H1 (cell line): ENCODE measurements at regions of chr19 and their contacts with region 1.

Region 1: GRCh38 chr19:11987405-11988281 is 22.8 kb downstream of the ZNF763 start:
- DNase-seq: peak; percentile 90 to 96
- H3K4me3 ChIP-seq: peak overlapping the region; percentile 82 to 99 (median 98)
- H3K27ac ChIP-seq: peak overlapping the region; percentile 77
- H3K4me1 ChIP-seq: peaks cover 0 to 5% (median 0%) of the 10 kb centered on the region in 4 experiments; a peak in 4 of 7 replicates
- H3K27me3 ChIP-seq: no peaks in the 10 kb centered on the region
- CTCF ChIP-seq: no peak
- EP300 ChIP-seq: no peak
- POLR2A ChIP-seq: peak; percentile 95 to 96
- RAD21 ChIP-seq: no peak

Region 2: DNA sequence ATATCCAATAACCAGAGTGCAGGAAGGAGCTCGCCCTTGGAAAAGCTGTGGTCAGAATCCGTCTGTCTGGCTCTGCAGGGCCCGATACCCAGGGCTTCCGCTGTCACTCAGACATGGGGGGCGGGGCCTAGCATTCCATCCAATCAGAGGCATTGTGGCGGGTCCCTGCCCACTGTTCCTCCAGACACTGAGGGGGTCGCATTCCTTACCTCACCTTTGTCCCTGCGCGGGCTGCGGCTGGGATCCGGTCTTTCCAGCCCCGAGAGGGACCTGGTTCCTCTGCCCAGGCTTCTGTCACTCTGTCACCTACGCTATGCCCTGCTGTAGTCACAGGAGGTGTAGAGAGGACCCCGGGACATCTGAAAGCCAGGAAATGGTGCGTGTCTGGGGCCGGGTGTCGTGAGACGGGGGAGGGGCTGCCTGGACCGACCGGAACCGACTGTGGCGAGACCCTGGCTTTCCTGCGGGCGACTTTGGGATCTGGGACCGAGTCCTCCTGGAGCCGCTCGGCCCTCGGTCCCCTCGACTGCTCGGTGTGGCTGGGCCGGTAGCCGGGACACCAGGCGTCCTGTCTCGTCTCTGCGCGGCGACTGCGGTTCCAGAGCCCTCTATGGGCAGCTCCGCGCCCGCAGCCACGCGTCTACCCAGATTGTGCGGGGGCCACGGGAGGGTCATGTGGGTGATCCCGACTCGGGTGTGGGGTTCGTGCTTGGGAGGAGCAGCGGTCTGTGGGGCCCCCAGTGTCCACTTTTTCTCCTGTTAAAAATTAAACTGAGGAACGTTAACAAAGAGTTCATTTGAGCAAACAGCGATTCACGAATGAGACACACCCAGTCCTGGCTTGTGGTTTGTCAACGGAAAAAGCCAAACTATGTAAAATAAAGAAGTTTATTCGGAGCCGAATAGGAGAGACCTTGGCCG is 99.8 kb before region 1 on chr19 and contains the start of gene ZNF69:
- CTCF ChIA-PET with region 1: interaction called, 169 read pairs
- POLR2A ChIA-PET with region 1: interaction called, 65 read pairs
- DNase-seq: peak; percentile 75 to 89
- H3K4me3 ChIP-seq: peak within 1 kb of the TSS; percentile 79 to 85 (median 84)
- H3K27ac ChIP-seq: peak within 1 kb of the TSS; percentile 81
- H3K4me1 ChIP-seq: peaks cover 4 to 15% (median 6%) of the 10 kb centered on the region in 4 experiments
- H3K27me3 ChIP-seq: no peaks in the 10 kb centered on the region
- CTCF ChIP-seq: peak in 1 of 3 experiments; percentile 6; a peak in 1 of 4 replicates
- EP300 ChIP-seq: no peak
- POLR2A ChIP-seq: peak; percentile 65 to 86
- RAD21 ChIP-seq: no peak
- total RNA-seq, gene ZNF69: 21.2 and 22.8 TPM in 2 replicates

Region 3: DNA sequence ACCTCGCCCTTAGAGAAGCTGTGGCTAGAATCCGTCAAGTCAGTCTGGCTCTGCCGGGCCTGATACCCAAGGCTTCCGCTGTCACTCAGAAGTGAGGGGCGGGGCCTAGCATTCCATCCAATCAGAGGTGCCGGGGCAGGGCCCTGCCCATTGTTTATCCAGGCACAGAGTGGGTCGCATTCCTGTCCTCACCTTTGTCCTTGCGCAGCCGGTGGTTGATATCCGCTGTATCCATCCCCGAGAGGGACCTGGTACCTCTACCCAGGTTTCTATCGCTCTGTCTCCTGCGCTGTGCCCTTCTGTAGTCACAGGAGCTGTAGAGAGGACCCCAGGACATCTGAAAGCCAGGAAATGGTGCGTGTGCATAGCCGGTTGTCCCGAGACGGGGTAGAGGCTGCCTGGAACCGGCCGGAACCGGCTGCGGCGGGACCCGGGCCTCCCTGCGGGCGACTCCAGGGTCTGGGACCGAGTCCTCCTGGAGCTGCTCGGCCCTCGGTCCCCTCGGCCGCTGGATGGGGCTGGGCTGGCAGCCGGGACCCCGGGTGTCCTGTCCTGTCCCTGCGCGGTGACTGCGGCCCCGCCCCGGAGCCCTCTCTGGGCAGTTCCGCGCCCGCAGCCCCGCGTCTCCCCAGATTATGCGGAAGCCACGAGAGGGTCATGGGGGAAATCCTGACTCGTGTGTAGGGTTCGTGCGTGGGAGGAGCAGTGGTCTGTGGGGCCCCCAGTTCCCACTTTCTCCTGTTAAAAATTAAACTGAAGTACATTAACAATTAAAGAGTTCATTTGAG is 22.6 kb before region 1 on chr19 and contains the start of gene ZNF763:
- CTCF ChIA-PET with region 1: interaction called, 92 read pairs
- POLR2A ChIA-PET with region 1: interaction called, 73 read pairs
- DNase-seq: peak; percentile 89 to 96
- H3K4me3 ChIP-seq: peak within 1 kb of the TSS; percentile 66 to 76 (median 72)
- H3K27ac ChIP-seq: peak within 1 kb of the TSS; percentile 75; the same call in 1 of the 2 replicates
- H3K4me1 ChIP-seq: peaks cover 0 to 7% (median 4%) of the 10 kb centered on the region in 4 experiments; a peak in 5 of 7 replicates
- H3K27me3 ChIP-seq: peaks cover 0 to 13% (median 7%) of the 10 kb centered on the region in 4 experiments; a peak in 5 of 7 replicates
- CTCF ChIP-seq: no peak
- EP300 ChIP-seq: no peak
- POLR2A ChIP-seq: peak; percentile 71 to 91
- RAD21 ChIP-seq: no peak; a peak in 2 of 4 replicates
- total RNA-seq, gene ZNF763: 1.7 TPM in 2 replicates

Region 4: GRCh38 chr19:12000152-12000981 is 12.7 kb after region 1 on chr19:
- CTCF ChIA-PET with region 1: interaction called, 30 read pairs
- POLR2A ChIA-PET with region 1: interaction called, 7 read pairs
- DNase-seq: no peak
- H3K4me3 ChIP-seq: no peak overlapping the region
- H3K27ac ChIP-seq: no peak overlapping the region
- H3K4me1 ChIP-seq: no peaks in the 10 kb centered on the region; a peak in 2 of 7 replicates
- H3K27me3 ChIP-seq: no peaks in the 10 kb centered on the region
- CTCF ChIP-seq: no peak
- EP300 ChIP-seq: no peak
- POLR2A ChIP-seq: no peak
- RAD21 ChIP-seq: no peak

Region 5: GRCh38 chr19:12052497-12053169 is 65.0 kb after region 1 on chr19 and contains the start of gene ZNF878:
- CTCF ChIA-PET with region 1: interaction called, 10 read pairs
- POLR2A ChIA-PET with region 1: interaction called, 72 read pairs
- DNase-seq: peak; percentile 95 to 97
- H3K4me3 ChIP-seq: peak within 1 kb of the TSS; percentile 42 to 92 (median 86)
- H3K27ac ChIP-seq: peak within 1 kb of the TSS; percentile 84; the same call in 1 of the 2 replicates
- H3K4me1 ChIP-seq: peaks cover 0 to 6% (median 4%) of the 10 kb centered on the region in 4 experiments; a peak in 3 of 7 replicates
- H3K27me3 ChIP-seq: no peaks in the 10 kb centered on the region
- CTCF ChIP-seq: peak in 2 of 3 experiments; percentile 13 to 14; a peak in 2 of 4 replicates
- EP300 ChIP-seq: no peak; a peak in 1 of 3 replicates
- POLR2A ChIP-seq: peak; percentile 96 to 100
- RAD21 ChIP-seq: no peak; a peak in 1 of 4 replicates
- total RNA-seq, gene ZNF878: 9.1 and 9.5 TPM in 2 replicates

Region 6: DNA sequence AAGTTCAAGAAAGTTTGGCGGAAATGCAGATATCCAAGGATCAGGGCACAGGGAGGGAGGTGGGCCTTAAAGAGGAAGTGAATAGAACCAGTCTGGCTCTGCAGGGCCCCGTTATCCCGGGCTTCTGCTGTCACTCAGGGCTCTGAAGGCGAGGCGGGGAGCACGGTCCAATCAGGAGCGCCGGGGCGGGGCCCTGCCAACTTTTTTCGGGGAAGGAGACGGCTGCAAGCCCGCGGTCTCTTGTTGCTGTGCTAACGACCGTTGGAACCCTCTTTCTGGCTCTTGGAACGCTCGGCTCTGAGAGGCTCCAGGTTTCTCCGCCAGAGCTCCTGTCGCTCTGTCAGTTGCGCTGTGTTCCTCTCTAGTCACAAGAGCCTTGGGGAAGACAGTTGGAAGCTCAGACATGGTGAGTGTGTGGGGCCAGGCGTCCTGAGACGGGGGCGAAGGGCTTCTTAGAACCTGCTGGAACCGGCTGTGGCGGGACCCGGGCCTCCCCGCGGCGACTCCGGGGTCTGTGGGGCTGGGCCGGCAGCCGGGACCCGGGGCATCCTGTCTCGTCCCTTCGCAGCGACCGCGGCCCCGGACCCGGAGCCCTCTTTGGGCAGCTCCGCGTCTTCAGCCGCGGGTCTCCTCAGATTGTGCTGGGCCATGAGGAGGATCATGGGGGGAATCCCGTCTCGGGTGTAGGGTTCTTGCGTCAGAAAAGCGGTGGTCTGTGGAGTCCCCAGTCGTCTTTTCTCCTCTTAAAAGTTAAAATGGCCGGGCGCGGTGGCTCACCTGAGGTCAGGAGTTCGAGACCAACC is 104.6 kb after region 1 on chr19:
- CTCF ChIA-PET with region 1: interaction called, 10 read pairs
- POLR2A ChIA-PET with region 1: interaction called, 10 read pairs
- DNase-seq: peak; percentile 81 to 93
- H3K4me3 ChIP-seq: peak overlapping the region; percentile 62 to 93 (median 76)
- H3K27ac ChIP-seq: peak overlapping the region; percentile 90
- H3K4me1 ChIP-seq: no peaks in the 10 kb centered on the region; a peak in 1 of 7 replicates
- H3K27me3 ChIP-seq: no peaks in the 10 kb centered on the region
- CTCF ChIP-seq: no peak
- EP300 ChIP-seq: no peak
- POLR2A ChIP-seq: peak; percentile 74 to 95
- RAD21 ChIP-seq: no peak

Region 7: DNA sequence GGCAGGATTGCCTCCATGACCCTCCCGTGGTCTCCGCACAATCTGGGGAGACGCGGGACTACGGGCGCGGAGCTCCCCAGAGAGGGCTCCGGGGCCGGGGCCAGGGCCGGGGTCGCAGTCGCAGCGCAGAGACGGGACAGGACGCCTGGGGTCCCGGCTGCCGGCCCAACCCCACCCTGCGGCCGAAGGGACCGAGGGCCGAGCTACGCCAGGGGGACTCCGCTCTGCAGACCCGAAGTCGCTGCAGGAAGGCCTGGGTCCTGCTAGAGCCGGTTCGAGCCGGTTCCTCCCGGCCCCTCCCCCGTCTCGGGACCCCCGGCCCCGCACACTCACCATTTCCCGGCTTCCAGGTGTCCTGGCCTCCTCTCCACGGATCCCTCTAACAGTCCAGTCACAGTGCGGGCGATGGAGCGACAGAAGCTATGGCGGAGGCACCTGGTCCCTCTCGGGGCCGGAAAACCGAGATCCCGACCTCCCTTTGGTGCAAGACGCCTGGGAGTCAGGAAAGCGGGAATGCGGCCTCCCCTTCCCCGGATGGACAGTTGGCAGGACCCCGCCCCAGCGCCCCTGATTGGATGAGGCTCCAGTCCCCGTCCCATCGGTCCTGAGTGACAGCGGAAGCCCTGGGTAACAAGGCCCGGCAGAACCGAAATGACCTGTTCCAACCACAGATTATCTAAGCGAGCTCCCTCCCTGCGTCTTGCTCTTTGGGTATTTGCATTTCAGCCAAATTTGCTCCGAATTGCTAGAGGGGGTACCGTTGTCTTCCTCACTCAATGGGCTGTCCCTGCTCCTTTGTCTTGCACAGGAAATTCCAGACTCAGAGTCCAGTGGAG is 168.8 kb after region 1 on chr19 and contains the start of gene ZNF625:
- CTCF ChIA-PET with region 1: interaction called, 5 read pairs
- POLR2A ChIA-PET with region 1: interaction called, 18 read pairs
- DNase-seq: peak; percentile 85 to 95
- H3K4me3 ChIP-seq: peak within 1 kb of the TSS; percentile 77 to 93 (median 82)
- H3K27ac ChIP-seq: peak within 1 kb of the TSS; percentile 93
- H3K4me1 ChIP-seq: peaks cover 0 to 3% (median 2%) of the 10 kb centered on the region in 4 experiments; a peak in 3 of 7 replicates
- H3K27me3 ChIP-seq: no peaks in the 10 kb centered on the region
- CTCF ChIP-seq: no peak
- EP300 ChIP-seq: no peak
- POLR2A ChIP-seq: peak; percentile 93 to 98
- RAD21 ChIP-seq: no peak
- total RNA-seq, gene ZNF625: 23.3 and 26.8 TPM in 2 replicates